A549 (cell line): ENCODE measurements at regions of chr6 and their contacts with region 1.

Region 1: GRCh38 chr6:53986165-53986720 is 125.0 kb upstream of the MLIP start:
- DNase-seq: peak; percentile 10 to 39
- ATAC-seq: peak in 1 of 2 experiments; percentile 68; a peak in 3 of 6 replicates
- H3K4me3 ChIP-seq: no peak overlapping the region
- H3K27ac ChIP-seq: no peak overlapping the region
- H3K4me1 ChIP-seq: peaks cover 26% of the 10 kb centered on the region
- CTCF ChIP-seq: peak; percentile 83
- EP300 ChIP-seq: no peak
- POLR2A ChIP-seq: no peak
- RAD21 ChIP-seq: peak; percentile 83 to 84

Region 2: GRCh38 chr6:53673162-53673683 is 313.0 kb before region 1 on chr6:
- CTCF ChIA-PET with region 1: no interaction called
- POLR2A ChIA-PET with region 1: no interaction called
- DNase-seq: peak; percentile 21 to 60
- ATAC-seq: peak; percentile 62; a peak in 4 of 6 replicates
- H3K4me3 ChIP-seq: no peak overlapping the region
- H3K27ac ChIP-seq: peak overlapping the region; percentile 34 to 76; a peak in 5 of 6 replicates
- H3K4me1 ChIP-seq: peaks cover 14% of the 10 kb centered on the region
- CTCF ChIP-seq: no peak
- EP300 ChIP-seq: no peak
- POLR2A ChIP-seq: no peak
- RAD21 ChIP-seq: no peak

Region 3: DNA sequence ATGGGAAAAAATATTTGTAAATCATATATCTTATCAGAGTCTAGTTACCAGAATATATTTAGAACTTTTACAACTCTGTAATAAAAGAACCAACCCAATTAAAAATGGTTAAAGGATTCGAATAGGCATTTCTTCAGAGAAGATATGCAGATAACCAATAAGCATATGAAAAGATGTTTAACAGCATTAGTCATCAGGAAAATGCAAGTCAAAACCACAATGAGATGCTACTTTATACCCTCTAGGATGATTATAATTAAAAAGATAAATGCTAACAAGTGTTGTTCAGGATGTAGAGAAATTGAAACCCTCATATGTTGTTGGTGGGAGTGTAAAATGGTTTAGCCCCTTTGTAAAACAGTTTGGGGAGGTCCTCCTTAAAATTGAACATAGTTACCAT is 97.3 kb before region 1 on chr6:
- CTCF ChIA-PET with region 1: no interaction called
- POLR2A ChIA-PET with region 1: no interaction called
- DNase-seq: no peak
- ATAC-seq: no peak
- H3K4me3 ChIP-seq: no peak overlapping the region
- H3K27ac ChIP-seq: no peak overlapping the region
- H3K4me1 ChIP-seq: no peaks in the 10 kb centered on the region
- CTCF ChIP-seq: no peak
- EP300 ChIP-seq: no peak
- POLR2A ChIP-seq: no peak
- RAD21 ChIP-seq: no peak

Region 4: DNA sequence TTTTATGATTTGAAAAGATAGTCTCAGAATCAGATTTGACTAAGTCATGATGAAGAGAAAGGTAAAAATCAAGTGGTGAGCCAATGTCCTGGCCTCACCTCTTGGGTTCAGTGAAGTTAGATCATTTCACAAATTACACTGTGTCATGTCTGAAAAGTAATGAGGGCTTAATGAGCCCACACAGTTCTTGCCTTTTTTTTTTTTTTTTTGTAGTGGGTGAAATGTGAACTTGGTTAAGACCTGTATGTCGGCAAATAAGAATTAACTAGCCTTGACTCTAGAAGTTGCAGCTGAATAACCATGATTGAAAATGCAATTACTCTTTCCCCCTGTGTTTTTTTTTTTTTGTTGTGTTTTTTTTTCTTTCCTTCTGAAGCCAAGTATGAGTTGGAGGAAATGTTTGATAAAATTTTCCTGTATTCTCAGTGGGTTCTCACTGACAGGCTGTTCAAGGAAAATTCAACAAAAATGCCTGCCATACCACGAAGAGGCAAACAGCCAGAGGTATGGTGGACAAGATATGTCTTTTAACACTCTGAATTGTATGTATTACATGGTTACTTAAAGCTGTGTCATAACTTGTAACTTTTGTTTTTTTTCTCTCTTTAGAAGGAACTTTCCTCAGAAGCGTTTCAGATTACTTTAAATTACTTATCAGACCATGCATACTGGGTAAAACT is 10.2 kb before region 1 on chr6:
- CTCF ChIA-PET with region 1: interaction called, 10 read pairs
- POLR2A ChIA-PET with region 1: no interaction called
- DNase-seq: no peak
- ATAC-seq: no peak
- H3K4me3 ChIP-seq: no peak overlapping the region
- H3K27ac ChIP-seq: no peak overlapping the region
- H3K4me1 ChIP-seq: no peaks in the 10 kb centered on the region
- CTCF ChIP-seq: no peak
- EP300 ChIP-seq: no peak
- POLR2A ChIP-seq: no peak
- RAD21 ChIP-seq: no peak

Region 5: DNA sequence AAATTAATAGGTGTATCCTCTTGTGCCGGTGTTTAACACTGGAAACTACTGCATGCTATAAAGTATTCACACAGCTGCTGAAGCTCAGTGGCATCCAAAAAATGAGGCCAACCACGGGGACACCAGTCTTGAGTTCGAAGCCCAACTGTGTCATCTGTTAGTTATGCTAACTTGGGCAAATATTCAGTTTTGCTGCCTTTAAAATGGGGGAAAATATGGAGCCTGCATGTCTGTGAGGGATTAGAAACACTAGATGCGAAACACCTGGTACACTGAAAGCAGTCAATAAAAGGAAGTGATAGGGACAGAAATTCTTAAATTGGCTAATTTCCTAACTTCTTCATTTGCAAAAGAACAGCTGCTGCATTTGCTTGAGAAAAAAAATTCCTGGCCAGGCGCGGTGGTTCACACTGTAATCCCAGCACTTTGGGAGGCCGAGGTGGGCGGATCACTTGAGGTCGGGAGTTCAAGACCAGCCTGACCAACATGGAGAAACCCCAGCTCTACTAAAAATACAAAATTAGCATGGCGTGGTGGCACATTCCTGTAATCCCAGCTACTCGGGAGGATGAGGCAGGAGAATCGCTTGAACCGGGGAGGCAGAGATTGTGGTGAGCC is 88.4 kb after region 1 on chr6:
- CTCF ChIA-PET with region 1: no interaction called
- POLR2A ChIA-PET with region 1: no interaction called
- DNase-seq: no peak
- ATAC-seq: no peak
- H3K4me3 ChIP-seq: no peak overlapping the region
- H3K27ac ChIP-seq: no peak overlapping the region
- H3K4me1 ChIP-seq: no peaks in the 10 kb centered on the region
- CTCF ChIP-seq: no peak
- EP300 ChIP-seq: no peak
- POLR2A ChIP-seq: no peak
- RAD21 ChIP-seq: no peak

Region 6: DNA sequence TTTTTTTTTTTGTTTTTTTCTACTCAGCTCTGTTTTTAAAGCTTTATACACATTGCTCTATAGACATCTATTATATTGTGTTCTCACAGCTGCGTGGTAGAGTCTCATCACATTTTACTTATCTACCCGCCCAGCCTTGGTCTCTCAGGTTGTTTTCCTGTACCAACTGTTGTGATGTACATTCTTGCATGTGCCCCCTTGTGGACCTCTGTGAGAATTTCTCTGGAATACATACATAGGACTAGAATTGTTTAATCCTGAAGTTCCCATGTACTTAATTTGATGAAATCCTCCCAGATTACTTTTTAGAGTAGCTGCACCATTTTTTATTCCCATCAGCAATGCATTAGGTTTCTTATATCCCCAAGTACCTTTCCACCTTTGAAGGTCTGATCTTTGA is 281.6 kb after region 1 on chr6:
- CTCF ChIA-PET with region 1: interaction called, 26 read pairs
- POLR2A ChIA-PET with region 1: no interaction called
- DNase-seq: peak; percentile 3 to 61
- ATAC-seq: peak in 1 of 2 experiments; percentile 66; a peak in 2 of 6 replicates
- H3K4me3 ChIP-seq: no peak overlapping the region
- H3K27ac ChIP-seq: no peak overlapping the region
- H3K4me1 ChIP-seq: no peaks in the 10 kb centered on the region
- CTCF ChIP-seq: peak; percentile 28; the same call in 1 of the 3 replicates
- EP300 ChIP-seq: no peak
- POLR2A ChIP-seq: no peak
- RAD21 ChIP-seq: peak; percentile 30 to 37; a peak in 3 of 5 replicates